Mucosa of descending colon (tissue), 3 donors: ENCODE measurements at regions of chr1 and their contacts with region 1.

Region 1: GRCh38 chr1:1919304-1920056 is 401 bp upstream of the TMEM52 start:
- DNase-seq: peak; percentile 100
- ATAC-seq: peak; percentile 87
- H3K4me3 ChIP-seq: peak overlapping the region; percentile 25
- H3K4me1 ChIP-seq: peaks cover 34% of the 10 kb centered on the region
- CTCF ChIP-seq: no peak

Region 2: DNA sequence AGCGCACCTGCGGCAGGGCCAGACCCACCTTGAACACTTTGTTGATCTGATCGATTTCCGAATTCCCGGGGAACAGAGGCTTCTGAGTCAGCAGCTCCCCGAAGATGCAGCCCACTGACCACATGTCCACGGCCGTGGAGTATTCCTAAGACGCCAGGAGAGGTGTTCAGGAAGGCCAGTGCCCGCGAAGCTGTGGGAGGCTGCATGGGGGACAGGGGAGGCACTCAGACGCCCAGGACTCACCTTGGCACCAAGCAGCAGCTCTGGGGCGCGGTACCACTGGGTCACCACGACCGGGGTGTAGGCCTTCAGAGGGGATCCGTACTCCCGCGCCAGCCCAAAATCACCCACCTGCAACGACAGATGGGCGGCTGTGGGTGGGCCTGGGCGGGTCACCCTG is 215.7 kb before region 1 on chr1:
- intact Hi-C with region 1: loop called in 1 of 2 experiments (anchors 10 kb)
- DNase-seq: peak in 2 of 3 donors; percentile 24 to 51
- ATAC-seq: no peak
- H3K4me3 ChIP-seq: no peak overlapping the region
- H3K4me1 ChIP-seq: peaks cover 4% of the 10 kb centered on the region
- CTCF ChIP-seq: no peak

Region 3: GRCh38 chr1:2314803-2315673 is 395.6 kb after region 1 on chr1:
- intact Hi-C with region 1: no loop called
- DNase-seq: peak; percentile 42 to 81 (median 71)
- ATAC-seq: peak; percentile 55
- H3K4me3 ChIP-seq: no peak overlapping the region
- H3K4me1 ChIP-seq: peaks cover 35% of the 10 kb centered on the region
- CTCF ChIP-seq: peak; percentile 95